A549 (cell line): ENCODE measurements at regions of chrX and their contacts with region 1.

Region 1: GRCh38 chrX:19334945-19335626 is 8.6 kb upstream of the PDHA1 start:
- DNase-seq: peak; percentile 39 to 89
- ATAC-seq: peak; percentile 64 to 79
- H3K4me3 ChIP-seq: peak overlapping the region; percentile 32
- H3K27ac ChIP-seq: peak overlapping the region; percentile 20 to 39; a peak in 4 of 6 replicates
- H3K4me1 ChIP-seq: no peaks in the 10 kb centered on the region
- CTCF ChIP-seq: peak; percentile 80
- EP300 ChIP-seq: no peak
- POLR2A ChIP-seq: no peak
- RAD21 ChIP-seq: peak; percentile 64 to 71

Region 2: DNA sequence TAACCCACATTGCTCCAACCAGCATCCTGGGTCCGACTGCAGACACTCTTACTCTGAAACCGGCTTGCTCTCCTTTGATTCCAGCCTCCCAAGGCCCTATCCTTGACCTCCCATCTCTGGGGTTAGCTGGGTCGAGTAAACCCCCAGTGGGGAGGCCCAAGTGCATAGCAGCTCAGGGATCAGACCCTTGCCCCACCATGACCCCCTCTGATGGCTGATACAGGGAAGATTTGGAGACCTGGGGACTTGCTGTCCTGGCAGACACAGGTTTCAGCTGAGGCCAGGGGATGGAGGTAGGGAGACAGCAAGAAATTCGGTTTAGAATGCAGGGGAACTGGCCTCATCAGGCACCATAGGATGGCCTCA is 933.3 kb before region 1 on chrX:
- CTCF ChIA-PET with region 1: interaction called, 16 read pairs
- POLR2A ChIA-PET with region 1: no interaction called
- DNase-seq: no peak
- ATAC-seq: no peak
- H3K4me3 ChIP-seq: no peak overlapping the region
- H3K27ac ChIP-seq: no peak overlapping the region
- H3K4me1 ChIP-seq: no peaks in the 10 kb centered on the region
- CTCF ChIP-seq: no peak
- EP300 ChIP-seq: no peak
- POLR2A ChIP-seq: no peak
- RAD21 ChIP-seq: no peak

Region 3: GRCh38 chrX:18938710-18939109 is 396.4 kb before region 1 on chrX:
- CTCF ChIA-PET with region 1: interaction called, 13 read pairs
- POLR2A ChIA-PET with region 1: no interaction called
- DNase-seq: no peak
- ATAC-seq: no peak
- H3K4me3 ChIP-seq: no peak overlapping the region
- H3K27ac ChIP-seq: no peak overlapping the region
- H3K4me1 ChIP-seq: no peaks in the 10 kb centered on the region
- CTCF ChIP-seq: no peak
- EP300 ChIP-seq: no peak
- POLR2A ChIP-seq: no peak
- RAD21 ChIP-seq: no peak

Region 4: DNA sequence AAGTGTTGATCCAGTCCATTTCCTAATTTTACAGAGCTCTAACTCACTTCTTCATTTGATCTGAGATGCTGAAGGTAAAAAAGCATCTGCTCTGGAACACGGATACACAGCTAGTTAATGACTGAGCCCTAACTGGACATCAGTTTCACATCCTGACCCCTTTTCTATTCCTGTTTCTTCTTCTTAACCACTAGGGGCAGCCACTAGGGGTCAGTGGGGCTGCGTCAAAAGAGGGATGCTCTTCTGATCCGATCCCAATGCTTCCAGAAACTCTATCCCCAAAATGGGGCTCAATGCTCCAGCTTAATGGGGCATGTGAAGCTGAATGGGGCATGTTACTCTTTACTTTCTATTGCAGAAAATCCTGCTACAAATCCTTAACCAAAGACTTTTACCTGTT is 317.8 kb before region 1 on chrX:
- CTCF ChIA-PET with region 1: interaction called, 49 read pairs
- POLR2A ChIA-PET with region 1: no interaction called
- DNase-seq: peak; percentile 55 to 61
- ATAC-seq: peak; percentile 83 to 93; a peak in 5 of 6 replicates
- H3K4me3 ChIP-seq: no peak overlapping the region
- H3K27ac ChIP-seq: peak overlapping the region in 1 of 2 experiments; percentile 41; a peak in 1 of 6 replicates
- H3K4me1 ChIP-seq: peaks cover 5% of the 10 kb centered on the region; the same call in 1 of the 3 replicates
- CTCF ChIP-seq: peak; percentile 80
- EP300 ChIP-seq: no peak
- POLR2A ChIP-seq: no peak
- RAD21 ChIP-seq: peak; percentile 88 to 90

Region 5: DNA sequence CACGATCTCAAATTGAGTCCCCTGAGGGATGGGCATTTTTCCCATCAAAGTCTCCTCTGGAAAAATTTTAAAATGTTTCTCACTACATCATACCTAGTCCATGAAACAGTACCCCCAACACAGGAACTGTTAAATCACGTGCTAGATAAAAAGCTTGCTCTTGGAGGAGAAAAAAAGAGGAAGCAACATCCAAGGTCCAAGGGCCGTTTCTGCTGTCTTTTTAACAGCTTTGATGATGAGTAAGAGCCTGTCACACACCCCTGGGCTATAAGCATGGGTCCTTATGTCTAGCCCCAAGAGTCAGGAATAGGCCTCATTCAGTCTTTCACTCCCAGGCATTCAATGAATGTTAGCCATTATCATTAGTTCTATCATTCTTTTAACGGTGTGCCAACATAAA is 423.5 kb after region 1 on chrX:
- CTCF ChIA-PET with region 1: no interaction called
- POLR2A ChIA-PET with region 1: no interaction called
- DNase-seq: no peak
- ATAC-seq: no peak
- H3K4me3 ChIP-seq: no peak overlapping the region
- H3K27ac ChIP-seq: no peak overlapping the region
- H3K4me1 ChIP-seq: peaks cover 13% of the 10 kb centered on the region; the same call in 2 of the 3 replicates
- CTCF ChIP-seq: no peak
- EP300 ChIP-seq: no peak
- POLR2A ChIP-seq: no peak
- RAD21 ChIP-seq: no peak